Right ventricle myocardium inferior (tissue), 1 donor: ENCODE measurements at regions of chr6 and their contacts with region 1.

Region 1: GRCh38 chr6:170516783-170517616 is 36.1 kb downstream of the PSMB1 start:
- DNase-seq: no peak
- ATAC-seq: peak; percentile 71

Region 2: GRCh38 chr6:170313716-170314295 is 203.2 kb before region 1 on chr6:
- intact Hi-C with region 1: loop called (anchors 5 kb)
- DNase-seq: no peak
- ATAC-seq: no peak

Region 3: DNA sequence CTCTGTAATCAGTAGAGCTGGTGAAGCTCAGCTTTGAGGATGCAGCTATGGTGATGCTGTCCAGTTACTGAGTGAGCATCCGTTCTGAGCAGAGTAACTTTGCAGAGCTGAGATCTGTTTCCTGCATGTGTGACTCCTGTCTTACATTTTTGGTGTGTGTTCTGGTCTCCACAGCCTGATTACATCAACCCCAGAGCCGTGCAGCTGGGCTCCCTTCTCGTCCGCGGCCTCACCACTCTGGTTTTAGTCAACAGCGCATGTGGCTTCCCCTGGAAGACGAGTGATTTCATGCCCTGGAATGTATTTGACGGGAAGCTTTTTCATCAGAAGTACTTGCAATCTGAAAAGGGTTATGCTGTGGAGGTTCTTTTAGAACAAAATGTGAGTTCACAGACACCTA is 128.9 kb before region 1 on chr6:
- intact Hi-C with region 1: loop called (anchors 5 kb)
- DNase-seq: no peak
- ATAC-seq: no peak

Region 4: GRCh38 chr6:170438402-170438753 is 78.6 kb before region 1 on chr6:
- intact Hi-C with region 1: loop called (anchors 5 kb)
- DNase-seq: peak; percentile 85
- ATAC-seq: peak; percentile 90

Region 5: DNA sequence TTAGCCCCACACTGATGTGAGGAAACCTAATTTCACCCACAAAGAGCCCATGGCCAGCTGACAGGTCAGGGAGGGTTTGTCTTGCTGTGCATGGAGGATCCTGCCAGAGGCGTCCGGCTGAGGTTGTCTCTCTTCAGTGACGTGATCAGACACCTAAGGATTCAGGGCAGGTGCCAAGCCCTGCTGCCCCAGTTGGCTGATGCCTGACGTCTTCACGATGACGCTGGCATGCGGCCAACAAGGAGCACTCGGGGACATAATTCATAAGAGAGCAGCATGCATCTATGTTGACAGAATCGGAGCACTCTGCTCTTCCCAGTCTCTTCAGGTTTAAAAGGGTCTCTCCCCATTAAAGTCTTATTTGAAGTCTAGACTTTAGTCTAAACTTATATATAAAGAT is 11.7 kb before region 1 on chr6:
- intact Hi-C with region 1: no loop called
- DNase-seq: no peak
- ATAC-seq: no peak